MCF 10A (cell line): ENCODE measurements at regions of chr19 and their contacts with region 1.

Region 1: DNA sequence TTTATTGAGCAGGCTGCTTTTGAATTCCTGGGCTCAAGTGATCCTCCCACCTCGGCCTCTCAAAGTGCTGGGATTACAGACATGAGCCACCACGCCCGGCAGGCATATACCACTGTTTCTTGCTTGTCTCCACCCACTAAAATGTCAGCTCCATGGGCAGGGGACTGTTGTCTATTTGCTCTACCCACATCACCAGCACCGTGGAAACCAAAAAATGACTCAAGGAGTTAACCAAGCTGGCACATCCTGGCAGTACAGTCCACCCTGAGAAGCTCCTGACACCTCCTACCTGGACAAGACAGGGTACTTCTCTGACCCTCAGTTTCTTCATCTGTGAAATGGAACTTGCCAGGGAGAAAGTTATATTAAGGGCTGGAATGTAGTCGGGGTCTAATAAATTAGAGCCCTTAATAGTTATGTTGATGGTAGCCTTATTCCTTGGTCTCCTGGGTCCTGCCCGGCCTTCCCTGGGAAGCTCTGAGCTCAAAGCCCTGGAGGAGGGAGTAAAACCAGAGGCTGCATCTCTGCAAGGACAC is 13.9 kb downstream of the RDH8 start:
- DNase-seq: peak; percentile 15
- H3K4me3 Mint-ChIP-seq: no peak overlapping the region
- H3K27ac Mint-ChIP-seq: no peak overlapping the region
- H3K4me1 Mint-ChIP-seq: no peaks in the 10 kb centered on the region
- H3K27me3 Mint-ChIP-seq: peaks cover 16% of the 10 kb centered on the region
- CTCF ChIP-seq: no peak

Region 2: DNA sequence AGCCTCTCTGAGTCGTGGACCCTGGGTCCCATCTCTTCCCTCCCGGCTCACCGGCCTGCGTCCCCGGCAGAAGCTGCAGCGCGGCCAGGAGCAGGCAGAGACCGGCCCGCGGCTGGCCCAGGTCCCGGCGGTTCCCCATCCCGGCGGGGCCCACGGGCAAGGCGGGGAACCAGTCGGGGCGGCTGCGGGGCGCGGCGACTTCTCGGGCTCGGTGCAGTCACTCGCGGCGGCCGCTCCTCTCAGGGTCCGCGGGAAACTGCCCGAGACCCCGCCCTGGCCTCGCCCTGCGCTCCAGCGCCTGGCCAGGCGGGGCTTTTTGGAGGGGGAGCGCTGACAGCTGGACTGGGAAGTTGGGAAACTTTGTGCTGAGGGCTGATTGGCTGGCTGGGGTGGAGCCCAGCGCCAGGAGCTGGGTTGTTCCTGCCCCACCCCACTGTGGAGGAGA is 17.0 kb before region 1 on chr19 and contains the start of gene COL5A3:
- CTCF ChIA-PET with region 1: interaction called, 11 read pairs
- POLR2A ChIA-PET with region 1: interaction called, 3 read pairs
- intact Hi-C with region 1: no loop called
- DNase-seq: peak; percentile 49
- H3K4me3 Mint-ChIP-seq: peak within 1 kb of the TSS; percentile 54
- H3K27ac Mint-ChIP-seq: no peak within 1 kb of the TSS
- H3K4me1 Mint-ChIP-seq: peaks cover 20% of the 10 kb centered on the region
- H3K27me3 Mint-ChIP-seq: peaks cover 78% of the 10 kb centered on the region
- CTCF ChIP-seq: no peak
- total RNA-seq, gene COL5A3: 0.98 and 1.5 TPM in 2 replicates

Region 3: DNA sequence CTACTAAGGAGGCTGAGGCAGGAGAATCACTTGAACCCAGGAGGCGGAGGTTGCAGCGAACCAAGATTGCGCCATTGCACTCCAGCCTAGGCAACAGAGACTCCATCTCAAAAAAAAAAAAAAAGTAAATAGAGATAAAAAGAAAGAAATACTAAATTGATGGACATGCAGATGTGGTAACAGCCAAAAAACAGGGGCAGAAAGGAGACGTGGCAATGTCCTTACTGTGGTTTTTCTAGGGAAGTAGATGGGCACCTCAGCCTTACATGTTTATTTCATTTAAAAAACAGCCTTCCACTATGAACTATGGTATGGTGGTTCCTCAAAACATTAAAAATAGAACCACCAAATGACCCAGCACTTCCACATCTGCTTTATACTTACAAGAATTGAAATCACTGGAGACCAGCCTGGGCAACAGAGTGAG is 99.0 kb after region 1 on chr19:
- CTCF ChIA-PET with region 1: no interaction called
- POLR2A ChIA-PET with region 1: no interaction called
- intact Hi-C with region 1: no loop called
- DNase-seq: no peak
- H3K4me3 Mint-ChIP-seq: no peak overlapping the region
- H3K27ac Mint-ChIP-seq: no peak overlapping the region
- H3K4me1 Mint-ChIP-seq: no peaks in the 10 kb centered on the region
- H3K27me3 Mint-ChIP-seq: no peaks in the 10 kb centered on the region
- CTCF ChIP-seq: no peak